PC-3 (cell line): ENCODE measurements at regions of chr7 and their contacts with region 1.

Region 1: GRCh38 chr7:144670218-144670617 is 165.6 kb downstream of the TPK1 start:
- DNase-seq: peak; percentile 48
- ATAC-seq: peak; percentile 57
- H3K4me3 ChIP-seq: no peak overlapping the region
- H3K27ac ChIP-seq: no peak overlapping the region
- H3K4me1 ChIP-seq: no peaks in the 10 kb centered on the region
- H3K27me3 ChIP-seq: no peaks in the 10 kb centered on the region
- CTCF ChIP-seq: peak; percentile 62; the same call in 1 of the 2 replicates

Region 2: GRCh38 chr7:144713850-144714249 is 43.6 kb after region 1 on chr7:
- CTCF ChIA-PET with region 1: interaction called, 5 read pairs
- POLR2A ChIA-PET with region 1: interaction called, 14 read pairs
- intact Hi-C with region 1: no loop called
- DNase-seq: no peak
- ATAC-seq: no peak
- H3K4me3 ChIP-seq: no peak overlapping the region
- H3K27ac ChIP-seq: no peak overlapping the region
- H3K4me1 ChIP-seq: no peaks in the 10 kb centered on the region
- H3K27me3 ChIP-seq: no peaks in the 10 kb centered on the region
- CTCF ChIP-seq: no peak

Region 3: DNA sequence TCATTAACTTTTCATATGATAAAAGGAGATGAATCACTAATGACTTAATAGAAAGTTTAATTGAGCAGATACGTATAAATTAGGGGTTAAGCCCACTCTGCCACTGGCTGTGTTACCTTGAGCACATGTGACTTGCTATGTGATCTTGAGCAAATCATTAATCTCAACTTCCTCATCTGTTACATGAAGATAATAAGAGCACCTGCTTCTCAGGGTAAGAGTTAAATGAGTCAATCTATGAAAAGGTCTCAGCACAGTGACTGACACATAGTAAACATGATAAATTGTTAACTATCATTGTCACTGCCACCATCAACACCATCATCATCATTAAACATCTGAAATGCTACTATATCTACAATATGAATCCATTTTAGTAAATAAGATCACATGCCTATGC is 54.9 kb after region 1 on chr7:
- CTCF ChIA-PET with region 1: no interaction called
- POLR2A ChIA-PET with region 1: no interaction called
- intact Hi-C with region 1: no loop called
- DNase-seq: no peak
- ATAC-seq: no peak
- H3K4me3 ChIP-seq: no peak overlapping the region
- H3K27ac ChIP-seq: no peak overlapping the region
- H3K4me1 ChIP-seq: peaks cover 7% of the 10 kb centered on the region
- H3K27me3 ChIP-seq: no peaks in the 10 kb centered on the region
- CTCF ChIP-seq: no peak

Region 4: DNA sequence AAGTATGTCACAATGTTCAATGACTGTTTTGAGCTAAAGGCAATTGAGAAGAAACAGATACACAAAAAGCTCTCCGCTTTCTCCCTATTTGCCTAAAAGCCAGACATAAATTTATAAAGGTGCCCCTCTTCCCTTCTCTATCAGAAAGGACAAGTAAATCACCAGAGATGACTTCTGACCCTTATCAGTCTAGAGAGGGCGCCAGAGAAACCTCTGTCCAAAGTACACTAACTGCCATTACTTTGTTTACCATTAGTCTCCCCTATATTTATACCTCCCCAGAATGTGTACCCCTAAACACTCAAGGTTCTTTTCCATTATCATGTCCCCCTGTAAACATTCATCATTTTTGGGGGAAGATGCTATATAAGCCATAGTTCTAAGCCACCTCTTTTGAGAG is 116.3 kb after region 1 on chr7:
- CTCF ChIA-PET with region 1: no interaction called
- POLR2A ChIA-PET with region 1: no interaction called
- intact Hi-C with region 1: loop called (anchors 1 kb)
- DNase-seq: no peak
- ATAC-seq: peak; percentile 42; the same call in 1 of the 2 replicates
- H3K4me3 ChIP-seq: no peak overlapping the region
- H3K27ac ChIP-seq: no peak overlapping the region
- H3K4me1 ChIP-seq: no peaks in the 10 kb centered on the region
- H3K27me3 ChIP-seq: no peaks in the 10 kb centered on the region
- CTCF ChIP-seq: peak; percentile 37

Region 5: DNA sequence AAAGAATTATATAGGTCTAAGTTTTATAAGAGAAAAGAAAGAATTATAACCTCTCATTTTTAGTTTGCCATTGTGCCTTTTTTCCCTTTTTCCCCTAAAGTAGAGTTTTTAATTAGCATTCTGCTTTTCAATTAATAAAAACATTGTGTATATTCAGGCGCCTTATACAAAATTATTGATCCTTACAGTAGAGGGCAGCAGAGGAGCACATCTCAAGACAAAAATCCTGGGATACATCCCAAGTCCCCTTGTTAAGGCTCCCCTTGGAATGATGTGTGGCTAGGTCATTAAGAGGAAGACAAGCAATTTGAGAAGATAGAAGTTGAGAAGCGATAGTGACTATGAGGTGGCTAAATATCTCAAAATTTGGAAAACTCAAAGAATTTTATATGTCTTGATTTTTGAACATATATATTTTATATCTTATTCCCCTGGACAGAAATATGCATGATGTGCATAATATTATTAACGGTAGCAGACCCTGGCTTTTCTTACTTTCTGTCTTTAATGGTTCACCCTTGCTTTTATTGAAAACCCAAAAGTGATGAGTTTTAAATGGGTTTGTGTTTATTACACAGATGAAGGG is 184.7 kb after region 1 on chr7:
- CTCF ChIA-PET with region 1: no interaction called
- POLR2A ChIA-PET with region 1: no interaction called
- intact Hi-C with region 1: loop called (anchors 10 kb)
- DNase-seq: peak; percentile 53
- ATAC-seq: peak; percentile 65
- H3K4me3 ChIP-seq: no peak overlapping the region
- H3K27ac ChIP-seq: no peak overlapping the region
- H3K4me1 ChIP-seq: no peaks in the 10 kb centered on the region
- H3K27me3 ChIP-seq: peaks cover 37% of the 10 kb centered on the region
- CTCF ChIP-seq: peak; percentile 70